Prostate gland (tissue), 2 donors: ENCODE measurements at regions of chr12 and their contacts with region 1.

Region 1: DNA sequence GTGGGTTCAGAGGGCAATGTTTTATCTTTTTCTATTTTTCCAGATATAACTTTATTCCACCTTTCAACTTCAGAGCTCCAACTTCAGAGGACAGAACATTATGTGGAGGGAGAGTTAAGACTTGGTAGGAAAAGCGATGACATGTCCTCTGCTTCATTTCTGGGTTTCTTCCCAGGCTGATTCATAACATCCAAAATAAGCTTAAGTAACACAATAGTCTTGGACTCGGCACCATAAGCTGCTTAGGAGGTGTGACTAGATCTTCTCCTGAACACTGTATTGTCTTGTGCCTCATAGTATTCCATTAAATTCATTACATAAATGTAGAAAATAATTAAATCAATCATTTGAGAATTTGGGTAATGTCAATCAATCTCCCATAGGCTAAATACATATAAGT is 95.5 kb upstream of the PDE3A start:
- DNase-seq: no peak
- H3K4me3 ChIP-seq: no peak overlapping the region
- H3K27ac ChIP-seq: no peak overlapping the region
- H3K4me1 ChIP-seq: no peaks in the 10 kb centered on the region
- H3K27me3 ChIP-seq: no peaks in the 10 kb centered on the region
- CTCF ChIP-seq: no peak
- POLR2A ChIP-seq: no peak

Region 2: GRCh38 chr12:19757317-19757877 is 515.4 kb before region 1 on chr12:
- intact Hi-C with region 1: loop called (anchors 10 kb)
- DNase-seq: no peak
- H3K4me3 ChIP-seq: no peak overlapping the region
- H3K27ac ChIP-seq: no peak overlapping the region
- H3K4me1 ChIP-seq: no peaks in the 10 kb centered on the region
- H3K27me3 ChIP-seq: no peaks in the 10 kb centered on the region
- CTCF ChIP-seq: peak in 3 of 4 experiments; percentile 22 to 63 (median 54)
- POLR2A ChIP-seq: no peak

Region 3: DNA sequence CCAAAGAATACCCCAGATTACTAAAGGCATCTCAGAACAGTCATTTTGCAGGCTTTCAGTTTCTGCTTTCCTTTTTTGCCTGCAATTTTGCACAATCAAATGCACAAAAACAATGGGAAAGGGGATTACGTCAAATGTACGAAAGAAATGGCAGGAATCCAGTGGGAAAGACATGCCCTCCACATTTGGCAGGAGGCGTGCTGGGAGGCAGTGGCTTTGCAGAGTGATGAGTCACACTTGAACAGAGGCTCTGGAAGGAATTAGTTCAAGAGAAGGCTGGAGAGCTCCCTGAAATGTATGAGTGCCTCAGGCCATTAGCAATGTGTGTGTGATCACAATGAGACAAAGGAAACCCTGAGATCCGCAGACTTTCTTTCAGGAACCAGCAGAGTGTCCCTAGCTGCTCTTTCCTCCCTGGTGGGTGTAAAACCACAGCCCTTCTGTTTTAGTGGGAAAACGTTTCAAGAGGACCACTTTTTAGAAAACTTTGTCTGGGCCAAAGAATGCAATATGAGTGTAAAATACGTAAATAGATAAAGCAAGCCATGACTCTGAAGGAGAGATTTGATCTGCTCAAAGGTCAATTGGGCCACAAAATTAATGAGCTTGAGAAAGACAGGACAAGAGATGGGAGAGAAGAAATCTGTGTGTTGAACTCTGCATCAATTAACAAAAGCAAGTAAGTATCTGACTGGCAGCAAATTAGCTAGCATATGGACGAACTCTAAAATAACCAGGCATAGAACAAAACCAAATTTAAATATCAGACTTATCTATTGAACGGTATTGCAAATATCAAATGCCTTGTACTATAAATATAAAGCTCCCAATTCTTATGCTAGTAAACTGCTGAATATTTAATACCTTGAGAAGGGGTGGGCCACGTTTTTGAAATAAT is 59.9 kb before region 1 on chr12:
- intact Hi-C with region 1: loop called (anchors 5 kb)
- DNase-seq: peak; percentile 54
- H3K4me3 ChIP-seq: no peak overlapping the region
- H3K27ac ChIP-seq: peak overlapping the region; percentile 56 to 65
- H3K4me1 ChIP-seq: no peaks in the 10 kb centered on the region
- H3K27me3 ChIP-seq: no peaks in the 10 kb centered on the region
- CTCF ChIP-seq: no peak
- POLR2A ChIP-seq: no peak

Region 4: GRCh38 chr12:20320552-20320951 is 47.8 kb after region 1 on chr12:
- intact Hi-C with region 1: no loop called
- DNase-seq: no peak
- H3K4me3 ChIP-seq: no peak overlapping the region
- H3K27ac ChIP-seq: no peak overlapping the region
- H3K4me1 ChIP-seq: no peaks in the 10 kb centered on the region
- H3K27me3 ChIP-seq: no peaks in the 10 kb centered on the region
- CTCF ChIP-seq: no peak
- POLR2A ChIP-seq: no peak

Region 5: GRCh38 chr12:20567413-20567812 is 294.6 kb after region 1 on chr12:
- intact Hi-C with region 1: no loop called
- DNase-seq: no peak
- H3K4me3 ChIP-seq: no peak overlapping the region
- H3K27ac ChIP-seq: no peak overlapping the region
- H3K4me1 ChIP-seq: no peaks in the 10 kb centered on the region
- H3K27me3 ChIP-seq: no peaks in the 10 kb centered on the region
- CTCF ChIP-seq: no peak
- POLR2A ChIP-seq: no peak

Region 6: GRCh38 chr12:20624718-20625117 is 351.9 kb after region 1 on chr12:
- intact Hi-C with region 1: loop called (anchors 5 kb)
- DNase-seq: no peak
- H3K4me3 ChIP-seq: no peak overlapping the region
- H3K27ac ChIP-seq: no peak overlapping the region
- H3K4me1 ChIP-seq: peaks cover 8% of the 10 kb centered on the region
- H3K27me3 ChIP-seq: no peaks in the 10 kb centered on the region
- CTCF ChIP-seq: no peak
- POLR2A ChIP-seq: no peak